ENCODE measurements at regions of chr2 and their contacts with region 1.

Region 1: GRCh38 chr2:16608661-16609643 is 56.7 kb downstream of the CYRIA start:
- DNase-seq: peak; percentile 77 to 91 (median 82)
- ATAC-seq: peak; percentile 97
- H3K4me3 ChIP-seq: peak overlapping the region; percentile 59 to 60
- H3K4me3 Mint-ChIP-seq: peak overlapping the region; percentile 89
- H3K27ac ChIP-seq: peak overlapping the region in 1 of 2 experiments; percentile 37
- H3K27ac Mint-ChIP-seq: peak overlapping the region; percentile 83
- H3K4me1 ChIP-seq: no peaks in the 10 kb centered on the region
- H3K4me1 Mint-ChIP-seq: peaks cover 9% of the 10 kb centered on the region
- H3K27me3 ChIP-seq: no peaks in the 10 kb centered on the region
- H3K27me3 Mint-ChIP-seq: no peaks in the 10 kb centered on the region
- CTCF ChIP-seq: peak; percentile 77

Region 2: GRCh38 chr2:15636972-15637785 is 971.8 kb before region 1 on chr2:
- CTCF ChIA-PET with region 1: interaction called, 4 read pairs
- POLR2A ChIA-PET with region 1: no interaction called
- intact Hi-C with region 1: loop called in 1 of 2 experiments (anchors 1 kb)
- DNase-seq: peak; percentile 20 to 73 (median 58)
- ATAC-seq: peak; percentile 78
- H3K4me3 ChIP-seq: no peak overlapping the region
- H3K4me3 Mint-ChIP-seq: no peak overlapping the region
- H3K27ac ChIP-seq: no peak overlapping the region
- H3K27ac Mint-ChIP-seq: no peak overlapping the region
- H3K4me1 ChIP-seq: no peaks in the 10 kb centered on the region
- H3K4me1 Mint-ChIP-seq: no peaks in the 10 kb centered on the region
- H3K27me3 ChIP-seq: no peaks in the 10 kb centered on the region
- H3K27me3 Mint-ChIP-seq: no peaks in the 10 kb centered on the region
- CTCF ChIP-seq: peak; percentile 94

Region 3: DNA sequence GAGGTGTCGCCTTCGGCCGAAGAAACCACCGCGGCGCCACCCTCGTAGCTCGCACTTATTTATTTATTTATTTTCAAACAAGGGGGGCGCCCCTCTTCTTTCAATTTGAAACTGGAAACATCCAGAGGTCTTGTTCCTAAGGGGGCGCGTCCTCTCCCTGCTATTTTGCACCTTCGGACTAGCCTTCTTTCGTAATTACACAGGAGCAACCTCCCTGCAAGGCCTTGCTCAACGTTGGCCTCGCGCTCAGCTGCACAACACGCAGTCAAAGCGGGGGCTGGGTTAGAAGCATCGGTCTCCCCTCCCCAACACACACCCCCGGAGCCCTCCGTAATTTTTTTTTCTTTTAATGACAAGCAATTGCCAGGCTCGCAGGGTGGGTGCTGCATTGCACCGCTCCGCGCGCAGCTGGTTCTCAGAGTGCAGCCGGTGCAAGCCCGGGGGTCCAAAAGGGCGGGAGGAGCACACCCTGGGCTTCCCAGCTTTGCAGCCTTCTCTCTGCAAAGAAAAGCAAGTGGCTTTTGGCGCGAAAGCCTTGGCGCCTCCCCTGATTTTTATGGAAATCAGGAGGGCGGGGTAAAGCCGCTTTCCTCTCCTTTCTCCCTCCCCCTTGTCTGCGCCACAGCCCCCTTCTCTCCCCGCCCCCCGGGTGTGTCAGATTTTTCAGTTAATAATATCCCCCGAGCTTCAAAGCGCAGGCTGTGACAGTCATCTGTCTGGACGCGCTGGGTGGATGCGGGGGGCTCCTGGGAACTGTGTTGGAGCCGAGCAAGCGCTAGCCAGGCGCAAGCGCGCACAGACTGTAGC is 668.9 kb before region 1 on chr2 and contains the start of gene MYCN:
- CTCF ChIA-PET with region 1: interaction called, 20 read pairs
- POLR2A ChIA-PET with region 1: no interaction called
- intact Hi-C with region 1: loop called in 1 of 2 experiments (anchors 1 kb)
- DNase-seq: peak in 6 of 9 experiments; percentile 30 to 63 (median 34)
- ATAC-seq: no peak
- H3K4me3 ChIP-seq: peak within 1 kb of the TSS; percentile 28 to 54
- H3K4me3 Mint-ChIP-seq: peak within 1 kb of the TSS; percentile 75
- H3K27ac ChIP-seq: no peak within 1 kb of the TSS
- H3K27ac Mint-ChIP-seq: no peak within 1 kb of the TSS
- H3K4me1 ChIP-seq: peaks cover 36% of the 10 kb centered on the region
- H3K4me1 Mint-ChIP-seq: peaks cover 31% of the 10 kb centered on the region
- H3K27me3 ChIP-seq: peaks cover 9 to 14% of the 10 kb centered on the region in 2 experiments
- H3K27me3 Mint-ChIP-seq: peaks cover 50% of the 10 kb centered on the region
- CTCF ChIP-seq: peak; percentile 41
- total RNA-seq, gene MYCN: not detected

Region 4: DNA sequence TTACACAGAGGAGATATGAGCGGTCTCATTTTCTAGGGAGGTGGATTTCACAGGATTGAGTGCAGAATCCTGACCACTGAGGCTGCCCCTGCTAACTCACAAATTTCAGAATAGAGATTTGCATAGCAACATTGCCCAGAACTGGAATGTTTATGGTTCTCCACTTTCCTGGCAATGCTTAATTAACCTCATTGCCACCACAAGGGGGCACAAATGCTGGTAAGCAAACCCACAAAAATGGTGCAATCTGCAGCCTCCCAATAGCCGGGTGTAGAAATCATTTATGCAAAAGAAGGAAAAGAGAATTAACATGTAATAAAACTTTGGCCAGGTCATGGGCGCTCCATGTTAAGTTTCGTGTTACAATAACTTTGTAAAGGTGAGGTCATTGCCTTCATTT is 55.7 kb before region 1 on chr2:
- CTCF ChIA-PET with region 1: interaction called, 6 read pairs
- POLR2A ChIA-PET with region 1: no interaction called
- intact Hi-C with region 1: loop called (anchors 1 to 2 kb)
- DNase-seq: peak in 4 of 9 experiments; percentile 5 to 51 (median 28)
- ATAC-seq: no peak
- H3K4me3 ChIP-seq: no peak overlapping the region
- H3K4me3 Mint-ChIP-seq: no peak overlapping the region
- H3K27ac ChIP-seq: no peak overlapping the region
- H3K27ac Mint-ChIP-seq: no peak overlapping the region
- H3K4me1 ChIP-seq: no peaks in the 10 kb centered on the region
- H3K4me1 Mint-ChIP-seq: no peaks in the 10 kb centered on the region
- H3K27me3 ChIP-seq: no peaks in the 10 kb centered on the region
- H3K27me3 Mint-ChIP-seq: no peaks in the 10 kb centered on the region
- CTCF ChIP-seq: peak; percentile 50

Region 5: GRCh38 chr2:16623031-16623430 is 14.1 kb after region 1 on chr2:
- CTCF ChIA-PET with region 1: interaction called, 13 read pairs
- POLR2A ChIA-PET with region 1: interaction called, 6 read pairs
- intact Hi-C with region 1: no loop called
- DNase-seq: no peak
- ATAC-seq: no peak
- H3K4me3 ChIP-seq: no peak overlapping the region
- H3K4me3 Mint-ChIP-seq: no peak overlapping the region
- H3K27ac ChIP-seq: no peak overlapping the region
- H3K27ac Mint-ChIP-seq: no peak overlapping the region
- H3K4me1 ChIP-seq: no peaks in the 10 kb centered on the region
- H3K4me1 Mint-ChIP-seq: peaks cover 32% of the 10 kb centered on the region
- H3K27me3 ChIP-seq: no peaks in the 10 kb centered on the region
- H3K27me3 Mint-ChIP-seq: no peaks in the 10 kb centered on the region
- CTCF ChIP-seq: no peak

Region 6: GRCh38 chr2:16665748-16666448 is 56.9 kb after region 1 on chr2 and contains the start of gene CYRIA:
- CTCF ChIA-PET with region 1: no interaction called
- POLR2A ChIA-PET with region 1: no interaction called
- intact Hi-C with region 1: loop called in 1 of 2 experiments (anchors 2 kb)
- DNase-seq: peak in 8 of 9 experiments; percentile 18 to 80 (median 37)
- ATAC-seq: peak; percentile 75
- H3K4me3 ChIP-seq: peak within 1 kb of the TSS; percentile 34 to 77
- H3K4me3 Mint-ChIP-seq: peak within 1 kb of the TSS; percentile 81
- H3K27ac ChIP-seq: peak within 1 kb of the TSS; percentile 3 to 83
- H3K27ac Mint-ChIP-seq: peak within 1 kb of the TSS; percentile 76
- H3K4me1 ChIP-seq: peaks cover 10% of the 10 kb centered on the region
- H3K4me1 Mint-ChIP-seq: peaks cover 22% of the 10 kb centered on the region
- H3K27me3 ChIP-seq: peaks cover 2 to 4% of the 10 kb centered on the region in 2 experiments
- H3K27me3 Mint-ChIP-seq: peaks cover 43% of the 10 kb centered on the region
- CTCF ChIP-seq: no peak
- total RNA-seq, gene CYRIA: 2.0 to 2.6 TPM

Region 7: DNA sequence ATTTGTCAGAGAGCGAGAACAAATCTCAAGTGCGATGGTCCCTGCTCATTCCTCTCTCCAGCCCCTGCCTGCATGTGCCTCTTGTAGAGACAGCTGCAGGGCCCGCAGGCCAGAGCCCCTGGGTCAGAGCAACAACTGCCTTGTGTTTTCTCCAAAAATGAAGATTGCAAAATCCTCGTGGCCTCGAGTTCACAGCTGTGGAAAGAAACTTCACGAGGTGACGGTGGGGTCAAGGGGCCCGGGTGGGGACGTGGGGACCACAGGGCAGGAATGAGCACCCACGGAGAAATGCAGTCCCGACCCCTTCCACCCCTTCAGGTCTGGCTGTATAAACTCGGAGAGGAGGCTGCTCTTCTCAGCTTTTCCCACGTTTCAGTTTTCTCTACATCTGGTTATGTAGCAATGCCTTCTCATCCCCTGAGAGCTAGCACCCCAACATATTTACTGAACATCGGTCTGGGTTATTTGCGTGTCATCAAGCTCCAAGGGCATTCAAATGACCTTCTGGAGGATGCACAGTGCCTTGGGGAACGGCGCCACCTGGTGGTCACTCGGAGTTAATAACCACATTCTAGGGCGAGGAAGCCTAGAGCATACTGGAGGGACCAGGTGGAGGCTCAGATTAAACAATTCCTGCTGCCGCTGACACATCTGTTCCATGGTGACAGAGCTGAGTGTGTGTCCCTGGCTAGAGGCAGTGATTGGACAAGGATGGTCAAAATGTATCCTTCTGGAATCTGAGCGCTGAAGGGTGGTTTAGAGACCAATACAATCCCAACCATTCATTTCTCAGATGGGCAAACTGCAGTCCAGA is 148.1 kb after region 1 on chr2:
- CTCF ChIA-PET with region 1: interaction called, 14 read pairs
- POLR2A ChIA-PET with region 1: no interaction called
- intact Hi-C with region 1: loop called in 1 of 2 experiments (anchors 2 kb)
- DNase-seq: peak; percentile 11 to 72 (median 58)
- ATAC-seq: peak; percentile 66
- H3K4me3 ChIP-seq: no peak overlapping the region
- H3K4me3 Mint-ChIP-seq: no peak overlapping the region
- H3K27ac ChIP-seq: no peak overlapping the region
- H3K27ac Mint-ChIP-seq: no peak overlapping the region
- H3K4me1 ChIP-seq: no peaks in the 10 kb centered on the region
- H3K4me1 Mint-ChIP-seq: no peaks in the 10 kb centered on the region
- H3K27me3 ChIP-seq: no peaks in the 10 kb centered on the region
- H3K27me3 Mint-ChIP-seq: peaks cover 3% of the 10 kb centered on the region
- CTCF ChIP-seq: peak; percentile 59